ENCODE measurements at regions of chr5 and their contacts with region 1.

Region 1: DNA sequence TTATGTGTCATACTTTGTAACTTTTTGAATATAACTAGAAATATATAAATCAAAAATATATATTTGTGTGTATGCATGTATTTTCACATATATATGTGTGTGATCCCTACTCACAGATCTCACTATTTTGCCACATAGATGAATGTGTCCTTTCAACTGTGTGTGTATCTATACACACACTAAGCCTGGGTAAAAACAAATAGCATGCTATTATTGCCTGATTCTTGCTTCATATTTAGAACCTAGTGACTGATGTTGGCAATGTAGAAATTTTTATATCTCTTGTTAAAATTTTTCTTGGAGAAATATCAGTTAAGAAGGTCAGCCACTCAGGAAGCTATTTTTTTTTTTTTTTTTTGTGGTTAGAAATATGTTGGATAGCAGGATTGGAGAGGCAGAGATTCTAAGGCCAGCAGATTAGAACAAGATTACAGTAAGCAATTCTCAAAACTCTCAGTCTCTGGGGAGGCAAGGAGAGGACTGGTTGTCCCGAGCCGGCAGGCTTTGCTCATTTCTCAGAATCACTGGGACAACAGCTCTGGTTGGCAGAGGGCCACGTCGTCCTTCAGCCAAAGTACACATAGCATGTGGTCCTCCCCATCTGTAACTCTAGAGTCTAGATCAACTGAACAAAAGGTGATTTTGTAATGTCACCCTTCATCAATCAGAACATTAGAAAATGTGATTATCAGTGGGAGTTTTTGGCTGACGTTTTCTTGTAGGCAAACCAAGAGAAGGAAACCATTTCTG is 19.7 kb downstream of the C6 start:
- DNase-seq: peak; percentile 97
- ATAC-seq: peak; percentile 95 to 98 (median 97)
- H3K4me3 ChIP-seq: no peak overlapping the region
- H3K27ac ChIP-seq: peak overlapping the region; percentile 50 to 84 (median 72)
- H3K4me1 ChIP-seq: peaks cover 4 to 27% (median 18%) of the 10 kb centered on the region in 9 donors
- H3K27me3 ChIP-seq: no peaks in the 10 kb centered on the region
- CTCF ChIP-seq: no peak

Region 2: DNA sequence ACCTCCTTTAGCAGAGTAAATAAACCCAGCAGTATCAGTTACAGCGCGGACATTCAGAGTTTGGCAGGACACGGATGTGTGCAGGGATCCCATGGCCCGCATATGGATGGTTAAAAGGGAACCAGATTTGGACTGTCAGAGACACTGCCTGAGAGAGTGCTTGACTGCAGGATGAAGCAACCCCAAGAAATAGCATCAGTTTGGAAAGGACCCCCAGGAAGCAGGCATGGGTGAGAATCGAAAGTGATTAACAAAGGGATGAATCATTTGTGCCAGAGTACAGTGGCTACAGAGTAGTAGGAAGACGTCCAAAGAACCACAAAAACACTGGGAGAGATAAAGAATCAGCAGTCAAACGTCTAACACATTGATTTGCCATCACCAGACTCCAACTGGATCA is 278.8 kb before region 1 on chr5:
- intact Hi-C with region 1: loop called in 1 of 10 experiments (anchors 10 kb)
- DNase-seq: no peak
- ATAC-seq: peak in 6 of 8 donors; percentile 38 to 77 (median 54)
- H3K4me3 ChIP-seq: peak overlapping the region in 8 of 10 donors; percentile 2 to 41 (median 28)
- H3K27ac ChIP-seq: peak overlapping the region in 8 of 10 donors; percentile 6 to 65 (median 37)
- H3K4me1 ChIP-seq: peaks cover 0 to 46% (median 9%) of the 10 kb centered on the region in 9 donors
- H3K27me3 ChIP-seq: no peaks in the 10 kb centered on the region
- CTCF ChIP-seq: no peak

Region 3: GRCh38 chr5:40991168-40991980 is 202.3 kb before region 1 on chr5:
- intact Hi-C with region 1: loop called in 3 of 10 experiments (anchors 1 to 10 kb)
- DNase-seq: peak in 1 of 2 donors; percentile 70
- ATAC-seq: peak; percentile 83 to 96 (median 94)
- H3K4me3 ChIP-seq: no peak overlapping the region
- H3K27ac ChIP-seq: peak overlapping the region; percentile 43 to 77 (median 68)
- H3K4me1 ChIP-seq: peaks cover 0 to 28% (median 16%) of the 10 kb centered on the region in 9 donors
- H3K27me3 ChIP-seq: no peaks in the 10 kb centered on the region
- CTCF ChIP-seq: no peak

Region 4: DNA sequence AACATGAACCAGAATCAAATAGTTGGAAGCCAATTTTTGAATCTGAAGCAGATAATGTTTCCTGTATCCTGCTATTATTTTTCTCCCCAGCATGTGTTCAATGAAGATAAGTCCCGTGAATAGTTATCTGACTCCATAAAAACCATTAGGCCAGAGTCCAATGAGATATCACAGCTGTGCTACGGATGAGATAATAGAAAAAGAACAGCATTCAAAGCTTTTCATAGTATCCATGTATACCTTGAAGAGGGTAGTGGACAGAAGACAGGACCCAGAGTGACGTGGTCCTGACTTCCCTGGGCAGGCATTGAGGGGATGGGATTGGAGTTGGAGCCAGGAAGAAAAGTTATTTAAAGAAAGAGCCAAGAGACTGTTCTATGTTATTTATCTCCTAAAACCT is 70.4 kb after region 1 on chr5:
- intact Hi-C with region 1: loop called in 2 of 10 experiments (anchors 5 to 10 kb)
- DNase-seq: no peak
- ATAC-seq: peak; percentile 62 to 84 (median 81)
- H3K4me3 ChIP-seq: no peak overlapping the region
- H3K27ac ChIP-seq: peak overlapping the region in 8 of 10 donors; percentile 27 to 71 (median 50)
- H3K4me1 ChIP-seq: peaks cover 5 to 30% (median 15%) of the 10 kb centered on the region in 9 donors
- H3K27me3 ChIP-seq: no peaks in the 10 kb centered on the region
- CTCF ChIP-seq: no peak

Region 5: DNA sequence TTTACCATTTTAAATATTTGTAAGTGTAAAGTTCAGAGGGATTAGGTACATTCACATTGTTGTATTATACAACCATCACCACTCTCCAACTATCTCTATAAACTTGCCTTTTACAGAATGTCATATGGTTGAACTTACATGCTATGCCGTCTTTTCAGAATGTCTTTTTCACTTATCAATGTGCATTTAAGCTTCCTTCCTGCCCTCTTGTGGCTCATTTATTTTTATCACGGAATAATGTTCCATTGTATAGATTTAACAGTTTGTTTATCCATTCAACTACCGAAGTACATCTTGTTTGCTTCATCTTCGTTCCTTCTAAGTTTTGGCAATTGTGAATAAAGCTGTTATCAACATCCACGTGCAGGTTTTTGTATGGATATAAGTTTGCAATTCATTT is 153.0 kb after region 1 on chr5:
- intact Hi-C with region 1: loop called in 1 of 10 experiments (anchors 10 kb)
- DNase-seq: no peak
- ATAC-seq: no peak
- H3K4me3 ChIP-seq: no peak overlapping the region
- H3K27ac ChIP-seq: no peak overlapping the region
- H3K4me1 ChIP-seq: peaks cover 0 to 59% (median 18%) of the 10 kb centered on the region in 9 donors
- H3K27me3 ChIP-seq: no peaks in the 10 kb centered on the region
- CTCF ChIP-seq: no peak

Region 6: GRCh38 chr5:41510176-41510831 is 316.7 kb after region 1 on chr5 and contains the start of gene PLCXD3:
- intact Hi-C with region 1: loop called in 1 of 10 experiments (anchors 10 kb)
- DNase-seq: peak; percentile 45
- ATAC-seq: peak; percentile 87 to 96 (median 94)
- H3K4me3 ChIP-seq: peak within 1 kb of the TSS; percentile 62 to 78 (median 72)
- H3K27ac ChIP-seq: peak within 1 kb of the TSS; percentile 62 to 88 (median 80)
- H3K4me1 ChIP-seq: peaks cover 3 to 32% (median 15%) of the 10 kb centered on the region in 9 donors
- H3K27me3 ChIP-seq: peaks cover 0 to 16% (median 0%) of the 10 kb centered on the region in 7 donors
- CTCF ChIP-seq: no peak
- total RNA-seq, gene PLCXD3: 36.2 to 104 (median 55.5) TPM

Measured in heart right ventricle (tissue), 16 donors.